ENCODE measurements at regions of chr7 and their contacts with region 1.

Region 1: GRCh38 chr7:104650991-104651640 is 322.7 kb downstream of the LHFPL3 start:
- DNase-seq: no peak
- H3K4me3 Mint-ChIP-seq: no peak overlapping the region
- H3K27ac Mint-ChIP-seq: no peak overlapping the region
- H3K4me1 Mint-ChIP-seq: no peaks in the 10 kb centered on the region
- H3K27me3 Mint-ChIP-seq: peaks cover 68% of the 10 kb centered on the region
- CTCF ChIP-seq: no peak

Region 2: DNA sequence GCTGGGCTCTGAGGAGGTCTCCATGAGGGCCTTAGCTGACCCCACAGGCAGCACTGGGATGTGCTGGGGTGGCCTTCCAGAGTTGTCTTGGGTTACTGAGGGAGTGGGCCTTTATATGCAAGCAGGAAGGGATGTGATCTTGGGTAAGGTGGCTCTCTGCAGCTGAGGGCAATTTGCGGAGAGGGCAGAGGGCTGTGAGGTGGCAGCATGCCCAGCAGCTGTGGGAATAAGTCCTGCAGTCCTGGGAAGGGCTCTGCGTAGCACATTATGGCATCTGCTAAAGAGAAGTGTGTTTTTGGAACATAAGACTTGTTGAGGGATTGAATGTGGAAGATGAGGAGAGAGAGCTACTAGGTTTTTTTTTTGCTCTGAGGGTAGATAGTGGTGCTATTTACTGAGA is 263.3 kb after region 1 on chr7:
- CTCF ChIA-PET with region 1: no interaction called
- intact Hi-C with region 1: loop called (anchors 10 kb)
- DNase-seq: no peak
- H3K4me3 Mint-ChIP-seq: no peak overlapping the region
- H3K27ac Mint-ChIP-seq: no peak overlapping the region
- H3K4me1 Mint-ChIP-seq: no peaks in the 10 kb centered on the region
- H3K27me3 Mint-ChIP-seq: peaks cover 14% of the 10 kb centered on the region
- CTCF ChIP-seq: no peak